ENCODE measurements at regions of chr15 and their contacts with region 1.

Region 1: GRCh38 chr15:58077427-58077826 is 11.9 kb upstream of the ALDH1A2 start:
- H3K4me3 ChIP-seq: no peak overlapping the region
- H3K27ac ChIP-seq: no peak overlapping the region
- H3K4me1 ChIP-seq: no peaks in the 10 kb centered on the region
- CTCF ChIP-seq: 0 out of 2 replicates have a peak, but pooled peaks have one; percentile 41

Region 2: GRCh38 chr15:58095415-58095814 is 18.0 kb after region 1 on chr15:
- CTCF ChIA-PET with region 1: interaction called, 10 read pairs
- POLR2A ChIA-PET with region 1: no interaction called
- H3K4me3 ChIP-seq: no peak overlapping the region
- H3K27ac ChIP-seq: no peak overlapping the region
- H3K4me1 ChIP-seq: no peaks in the 10 kb centered on the region
- CTCF ChIP-seq: no peak

Region 3: DNA sequence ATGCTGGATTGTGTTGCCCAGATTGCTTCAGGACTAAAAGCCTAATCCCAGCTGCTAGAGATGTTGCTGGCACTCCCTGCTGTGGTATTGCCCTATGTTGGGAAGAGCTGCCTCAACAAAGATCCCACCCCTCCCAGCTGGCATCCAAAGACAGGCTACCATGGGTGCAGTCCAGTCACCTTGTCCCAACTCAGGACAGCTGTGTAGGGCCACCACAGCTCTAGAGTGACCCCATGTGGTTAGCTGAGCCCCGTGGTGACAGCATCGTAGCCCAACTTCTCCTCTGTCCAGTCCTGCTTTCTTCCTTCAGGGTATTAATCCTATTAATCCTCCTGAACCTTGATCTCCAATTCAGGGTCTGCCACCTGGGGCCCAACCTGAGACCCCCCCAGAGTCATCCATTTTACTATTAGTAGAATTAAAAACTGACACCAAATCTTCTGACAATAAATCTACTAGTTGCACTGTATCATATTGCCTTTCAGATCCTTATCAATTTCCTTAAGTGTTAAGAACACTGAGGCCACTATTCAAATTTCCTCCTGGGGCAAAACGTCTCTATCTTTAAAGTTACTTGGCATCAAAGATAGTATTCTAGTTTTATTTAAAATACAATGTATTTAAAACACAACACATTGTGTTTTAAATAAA is 144.3 kb after region 1 on chr15:
- CTCF ChIA-PET with region 1: interaction called, 11 read pairs
- POLR2A ChIA-PET with region 1: no interaction called
- H3K4me3 ChIP-seq: no peak overlapping the region
- H3K27ac ChIP-seq: no peak overlapping the region
- H3K4me1 ChIP-seq: no peaks in the 10 kb centered on the region
- CTCF ChIP-seq: no peak; the same call in 1 of the 2 replicates